ENCODE measurements at regions of chr14 and their contacts with region 1.

Region 1: DNA sequence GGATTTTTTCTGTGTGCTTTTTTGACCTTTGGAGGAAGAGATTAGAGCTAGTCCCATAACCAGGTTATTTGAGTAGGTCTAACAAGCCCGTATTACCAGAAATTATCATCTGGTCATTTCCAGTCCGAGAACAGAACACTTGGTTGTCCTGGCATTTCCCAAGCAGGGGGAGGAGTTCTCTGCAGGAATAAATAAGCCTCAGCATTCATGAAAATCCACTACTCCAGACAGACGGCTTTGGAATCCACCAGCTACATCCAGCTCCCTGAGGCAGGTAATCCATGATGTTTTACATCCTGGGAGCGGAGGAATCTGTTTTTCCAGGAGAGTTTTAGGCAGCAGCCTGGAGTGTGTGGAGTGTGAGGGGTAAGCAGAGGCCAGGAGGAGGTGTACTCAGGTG is at the start of gene SERPINA3:
- DNase-seq: peak; percentile 91
- ATAC-seq: peak; percentile 76
- H3K4me3 ChIP-seq: peak within 1 kb of the TSS; percentile 62 to 69 (median 68)
- H3K27ac ChIP-seq: peak within 1 kb of the TSS; percentile 77
- H3K4me1 ChIP-seq: peaks cover 77% of the 10 kb centered on the region
- H3K27me3 ChIP-seq: no peaks in the 10 kb centered on the region; a peak in 1 of 5 replicates
- CTCF ChIP-seq: no peak
- EP300 ChIP-seq: peak in 1 of 2 experiments; percentile 73; a peak in 2 of 4 replicates
- POLR2A ChIP-seq: peak; percentile 72 to 98
- RAD21 ChIP-seq: no peak
- total RNA-seq, gene SERPINA3: 433 and 825 TPM in 2 replicates

Region 2: DNA sequence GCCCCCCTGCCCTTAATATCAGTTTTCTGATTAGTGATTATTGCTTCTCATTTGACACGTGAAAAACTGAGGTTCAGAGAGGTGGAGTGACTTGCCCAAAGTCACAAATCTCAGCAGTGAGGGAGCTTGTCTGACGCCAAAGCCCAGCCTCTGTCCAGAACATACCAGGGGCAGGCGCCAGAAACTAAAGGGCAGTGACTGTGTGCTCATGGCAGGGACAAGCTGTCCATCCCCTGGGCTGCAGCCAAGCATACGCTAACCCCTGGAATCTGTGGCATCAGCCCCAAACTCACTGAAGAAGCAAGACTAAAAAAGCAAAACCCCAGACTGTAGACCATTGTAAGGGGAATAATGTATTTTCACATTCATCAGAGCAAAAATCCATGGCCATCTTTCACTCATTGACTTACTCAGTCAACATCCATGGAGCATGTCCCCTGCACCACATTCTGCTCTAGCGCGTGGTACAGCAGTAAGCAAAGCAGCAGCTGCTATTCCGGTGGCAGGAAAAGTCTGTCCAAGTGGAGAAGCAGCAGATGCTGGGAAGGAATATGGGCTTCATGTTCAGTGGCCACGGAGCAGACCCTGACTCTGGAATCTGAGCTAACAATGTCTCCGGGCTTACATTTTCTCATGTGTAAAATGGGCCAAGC is 52.4 kb before region 1 on chr14:
- CTCF ChIA-PET with region 1: no interaction called
- POLR2A ChIA-PET with region 1: interaction called, 42 read pairs
- in situ Hi-C with region 1: no loop called
- intact Hi-C with region 1: no loop called
- DNase-seq: no peak
- ATAC-seq: no peak
- H3K4me3 ChIP-seq: no peak overlapping the region
- H3K27ac ChIP-seq: no peak overlapping the region
- H3K4me1 ChIP-seq: peaks cover 64% of the 10 kb centered on the region
- H3K27me3 ChIP-seq: no peaks in the 10 kb centered on the region
- CTCF ChIP-seq: no peak
- EP300 ChIP-seq: no peak
- POLR2A ChIP-seq: no peak
- RAD21 ChIP-seq: no peak

Region 3: GRCh38 chr14:94571950-94572349 is 40.2 kb before region 1 on chr14:
- CTCF ChIA-PET with region 1: no interaction called
- POLR2A ChIA-PET with region 1: interaction called, 35 read pairs
- in situ Hi-C with region 1: no loop called
- intact Hi-C with region 1: no loop called
- DNase-seq: peak; percentile 37
- ATAC-seq: peak; percentile 7; the same call in 2 of the 3 replicates
- H3K4me3 ChIP-seq: no peak overlapping the region
- H3K27ac ChIP-seq: peak overlapping the region; percentile 94
- H3K4me1 ChIP-seq: peaks cover 89% of the 10 kb centered on the region
- H3K27me3 ChIP-seq: no peaks in the 10 kb centered on the region
- CTCF ChIP-seq: no peak
- EP300 ChIP-seq: no peak
- POLR2A ChIP-seq: no peak
- RAD21 ChIP-seq: no peak

Region 4: DNA sequence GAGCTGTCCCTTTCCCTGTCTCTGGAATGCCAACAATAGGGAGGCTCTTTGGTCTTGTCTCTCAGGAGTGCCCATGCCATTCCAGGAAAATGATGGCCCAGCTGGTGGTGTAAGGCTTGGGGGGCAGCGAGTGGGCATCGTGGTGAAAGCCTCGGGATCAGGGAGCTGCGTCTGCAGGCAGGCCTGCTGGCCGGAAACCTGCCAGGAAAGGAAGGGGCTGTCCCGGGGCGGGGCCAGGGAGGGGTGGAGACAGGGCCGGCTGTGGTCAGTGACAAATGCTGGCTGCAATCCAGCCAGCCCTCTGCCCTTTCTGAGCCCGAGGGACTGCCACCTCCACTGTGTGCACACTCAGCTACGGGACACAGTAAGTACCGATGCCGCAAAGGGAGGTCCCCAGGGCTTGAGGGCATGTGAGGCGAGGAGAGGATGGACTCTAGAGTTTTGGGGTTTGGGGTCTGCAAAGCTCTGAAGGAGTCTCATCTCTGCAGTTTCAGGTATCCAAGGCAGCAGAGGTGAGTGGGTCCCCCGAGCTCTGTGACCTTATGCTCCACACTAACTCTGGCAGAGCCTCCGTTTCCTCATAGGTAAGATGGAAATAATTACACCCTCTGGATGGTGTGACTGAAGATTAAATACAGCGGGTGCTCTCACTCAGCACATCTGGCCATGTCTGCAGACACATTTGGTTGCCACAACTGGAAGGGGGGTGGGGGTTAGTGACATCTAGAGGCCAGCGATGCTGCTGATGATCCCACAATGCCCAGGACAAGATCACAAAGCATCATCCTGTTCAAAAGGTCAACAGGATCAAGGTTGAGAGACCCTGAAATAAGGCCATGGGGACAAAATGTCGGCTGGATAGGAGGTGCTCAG is 30.8 kb before region 1 on chr14 and contains the start of gene SERPINA5:
- CTCF ChIA-PET with region 1: no interaction called
- POLR2A ChIA-PET with region 1: interaction called, 52 read pairs
- in situ Hi-C with region 1: no loop called
- intact Hi-C with region 1: loop called (anchors 5 kb)
- DNase-seq: peak; percentile 83
- ATAC-seq: peak; percentile 95
- H3K4me3 ChIP-seq: peak within 1 kb of the TSS; percentile 61 to 88 (median 75)
- H3K27ac ChIP-seq: peak within 1 kb of the TSS; percentile 88
- H3K4me1 ChIP-seq: peaks cover 75% of the 10 kb centered on the region
- H3K27me3 ChIP-seq: no peaks in the 10 kb centered on the region; a peak in 1 of 5 replicates
- CTCF ChIP-seq: peak; percentile 54
- EP300 ChIP-seq: peak in 1 of 2 experiments; percentile 46; a peak in 2 of 4 replicates
- POLR2A ChIP-seq: peak; percentile 83 to 92
- RAD21 ChIP-seq: peak; percentile 37; the same call in 1 of the 2 replicates
- total RNA-seq, gene SERPINA5: 237 and 498 TPM in 2 replicates

Region 5: GRCh38 chr14:94622653-94623421 is 10.7 kb after region 1 on chr14:
- CTCF ChIA-PET with region 1: no interaction called
- POLR2A ChIA-PET with region 1: interaction called, 24 read pairs
- in situ Hi-C with region 1: no loop called
- intact Hi-C with region 1: no loop called
- DNase-seq: no peak
- ATAC-seq: no peak
- H3K4me3 ChIP-seq: no peak overlapping the region
- H3K27ac ChIP-seq: no peak overlapping the region
- H3K4me1 ChIP-seq: peaks cover 44% of the 10 kb centered on the region
- H3K27me3 ChIP-seq: no peaks in the 10 kb centered on the region
- CTCF ChIP-seq: no peak
- EP300 ChIP-seq: no peak
- POLR2A ChIP-seq: no peak; a peak in 1 of 4 replicates
- RAD21 ChIP-seq: no peak

Region 6: GRCh38 chr14:94681300-94682060 is 69.3 kb after region 1 on chr14:
- CTCF ChIA-PET with region 1: no interaction called
- POLR2A ChIA-PET with region 1: no interaction called
- in situ Hi-C with region 1: no loop called
- intact Hi-C with region 1: loop called (anchors 5 kb)
- DNase-seq: peak; percentile 78
- ATAC-seq: peak; percentile 78
- H3K4me3 ChIP-seq: no peak overlapping the region; a peak in 1 of 6 replicates
- H3K27ac ChIP-seq: peak overlapping the region; percentile 80
- H3K4me1 ChIP-seq: peaks cover 66% of the 10 kb centered on the region
- H3K27me3 ChIP-seq: peaks cover 5 to 9% of the 10 kb centered on the region in 2 experiments; a peak in 3 of 5 replicates
- CTCF ChIP-seq: peak; percentile 95
- EP300 ChIP-seq: 0 out of 4 replicates have a peak, but pooled peaks of 1 of the 2 experiments have one; percentile 40
- POLR2A ChIP-seq: no peak
- RAD21 ChIP-seq: peak; percentile 90

Measured in HepG2 (cell line).